Tibial artery (tissue), 4 donors: ENCODE measurements at regions of chr22 and their contacts with region 1.

Region 1: GRCh38 chr22:46367707-46368191 is 32.2 kb downstream of the TRMU start:
- DNase-seq: no peak
- H3K4me3 ChIP-seq: no peak overlapping the region
- H3K27ac ChIP-seq: no peak overlapping the region
- H3K4me1 ChIP-seq: no peaks in the 10 kb centered on the region
- H3K27me3 ChIP-seq: peaks cover 0 to 42% of the 10 kb centered on the region in 2 donors
- CTCF ChIP-seq: peak; percentile 41 to 55

Region 2: DNA sequence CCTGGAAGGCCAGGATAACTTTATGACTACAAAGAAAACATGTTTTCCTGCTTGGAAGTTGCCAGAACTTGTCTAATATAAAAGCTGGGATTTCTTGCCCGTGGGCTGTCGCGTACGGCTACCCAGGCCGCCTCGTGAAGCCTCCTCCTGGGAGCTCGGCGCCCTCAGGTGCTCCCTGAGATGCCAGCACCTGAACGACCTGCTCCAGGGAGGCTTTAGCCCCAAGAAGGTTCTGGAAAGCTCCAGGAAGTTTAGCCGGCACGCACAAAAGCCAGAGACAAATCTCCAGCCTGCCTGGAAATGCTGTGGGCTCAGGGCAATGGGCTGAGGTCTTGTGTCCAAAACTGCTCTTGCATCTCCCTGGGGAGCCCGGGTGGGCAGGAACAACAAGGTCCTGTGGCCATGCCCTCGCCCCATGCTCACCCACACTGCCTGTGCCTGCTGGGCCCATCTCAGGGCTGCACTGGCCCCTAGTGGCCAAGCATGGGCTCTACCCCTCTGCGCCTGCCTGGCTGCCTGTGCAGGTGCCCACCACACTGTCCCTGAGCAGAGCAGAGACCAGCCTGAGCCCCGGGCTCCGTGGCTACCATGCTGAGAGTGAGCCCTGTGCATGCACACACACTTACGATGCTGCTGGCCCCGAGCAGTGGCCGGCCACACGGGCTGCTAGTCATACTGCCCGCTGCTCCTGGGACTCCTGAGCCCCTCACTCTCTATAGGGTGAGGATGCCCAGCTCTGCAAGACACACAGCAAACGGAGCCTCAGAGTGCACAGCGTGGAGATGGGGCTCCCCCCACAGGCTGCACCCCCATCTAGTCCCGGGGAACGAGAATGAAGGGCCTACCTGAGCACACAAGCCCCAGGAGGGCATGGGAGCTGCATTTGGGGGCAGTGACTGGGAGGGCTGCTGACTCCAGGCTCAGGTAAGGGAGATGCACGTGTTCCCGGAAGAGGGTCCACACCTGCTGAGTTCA is 174.5 kb after region 1 on chr22:
- intact Hi-C with region 1: loop called (anchors 5 kb)
- DNase-seq: peak; percentile 58 to 80
- H3K4me3 ChIP-seq: no peak overlapping the region
- H3K27ac ChIP-seq: no peak overlapping the region
- H3K4me1 ChIP-seq: peaks cover 0 to 27% (median 23%) of the 10 kb centered on the region in 4 donors
- H3K27me3 ChIP-seq: peaks cover 0 to 45% of the 10 kb centered on the region in 2 donors
- CTCF ChIP-seq: peak; percentile 78 to 83